Activated naive CD4-positive, alpha-beta T cell treated with anti-CD3 and anti-CD28 coated beads for 36 hours (primary cell): ENCODE measurements at regions of chr11 and their contacts with region 1.

Region 1: GRCh38 chr11:14907411-14908213 is 15.6 kb upstream of the CYP2R1 start:
- DNase-seq: peak; percentile 94
- H3K4me3 Mint-ChIP-seq: no peak overlapping the region
- H3K27ac Mint-ChIP-seq: no peak overlapping the region
- H3K4me1 Mint-ChIP-seq: peaks cover 39% of the 10 kb centered on the region
- H3K27me3 Mint-ChIP-seq: no peaks in the 10 kb centered on the region

Region 2: GRCh38 chr11:14454861-14455632 is 452.6 kb before region 1 on chr11:
- CTCF ChIA-PET with region 1: interaction called, 14 read pairs
- intact Hi-C with region 1: no loop called
- DNase-seq: no peak
- H3K4me3 Mint-ChIP-seq: no peak overlapping the region
- H3K27ac Mint-ChIP-seq: no peak overlapping the region
- H3K4me1 Mint-ChIP-seq: no peaks in the 10 kb centered on the region
- H3K27me3 Mint-ChIP-seq: no peaks in the 10 kb centered on the region

Region 3: GRCh38 chr11:14537134-14537599 is 370.4 kb before region 1 on chr11:
- CTCF ChIA-PET with region 1: interaction called, 86 read pairs
- intact Hi-C with region 1: loop called (anchors 1 kb)
- DNase-seq: peak; percentile 66
- H3K4me3 Mint-ChIP-seq: peak overlapping the region; percentile 68
- H3K27ac Mint-ChIP-seq: peak overlapping the region; percentile 90
- H3K4me1 Mint-ChIP-seq: peaks cover 32% of the 10 kb centered on the region
- H3K27me3 Mint-ChIP-seq: no peaks in the 10 kb centered on the region

Region 4: DNA sequence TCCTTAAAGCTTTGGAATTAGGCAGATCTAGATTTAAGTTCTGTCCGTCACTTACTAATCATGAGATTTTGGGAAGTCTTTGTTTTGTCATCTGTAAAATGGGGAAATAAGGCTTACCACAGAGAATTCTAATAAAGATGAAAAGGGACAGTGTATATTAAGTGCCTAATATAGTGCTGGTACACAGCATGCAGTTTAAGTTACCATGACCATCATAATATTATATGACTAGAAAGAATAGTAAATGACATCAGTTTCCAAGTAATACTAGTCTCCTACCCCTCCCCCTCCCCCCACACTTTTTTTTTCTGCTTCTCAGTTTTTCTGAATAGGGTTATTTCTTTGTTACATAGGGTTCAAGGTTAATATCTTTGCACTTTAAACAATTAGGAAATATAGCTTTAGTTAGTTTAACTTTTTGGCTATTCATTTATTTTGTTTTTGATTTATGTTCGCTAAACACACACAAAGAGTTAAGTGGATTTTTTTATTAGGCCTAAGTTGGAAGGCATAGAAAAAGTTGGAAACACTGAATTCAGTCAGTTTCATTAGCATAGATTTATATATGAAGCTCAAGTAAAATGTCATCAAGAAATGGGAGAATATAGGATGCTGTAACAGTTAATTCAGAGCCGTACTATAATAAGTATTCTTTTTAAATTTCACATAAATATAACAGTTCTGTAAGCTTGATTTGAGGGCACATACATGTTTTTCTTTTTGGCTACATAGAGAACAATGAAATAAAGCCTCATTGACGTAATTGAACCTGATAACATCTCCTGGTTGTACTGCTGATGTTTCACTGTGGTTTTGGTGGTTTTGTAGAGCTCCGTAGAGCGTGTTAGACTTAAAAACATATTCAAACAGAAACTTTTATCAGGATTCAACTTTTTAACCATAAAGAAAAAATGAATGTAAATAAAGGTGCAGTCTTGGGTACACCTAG is 142.8 kb before region 1 on chr11:
- CTCF ChIA-PET with region 1: interaction called, 11 read pairs
- intact Hi-C with region 1: no loop called
- DNase-seq: peak; percentile 58
- H3K4me3 Mint-ChIP-seq: peak overlapping the region; percentile 41
- H3K27ac Mint-ChIP-seq: no peak overlapping the region
- H3K4me1 Mint-ChIP-seq: peaks cover 45% of the 10 kb centered on the region
- H3K27me3 Mint-ChIP-seq: no peaks in the 10 kb centered on the region

Region 5: DNA sequence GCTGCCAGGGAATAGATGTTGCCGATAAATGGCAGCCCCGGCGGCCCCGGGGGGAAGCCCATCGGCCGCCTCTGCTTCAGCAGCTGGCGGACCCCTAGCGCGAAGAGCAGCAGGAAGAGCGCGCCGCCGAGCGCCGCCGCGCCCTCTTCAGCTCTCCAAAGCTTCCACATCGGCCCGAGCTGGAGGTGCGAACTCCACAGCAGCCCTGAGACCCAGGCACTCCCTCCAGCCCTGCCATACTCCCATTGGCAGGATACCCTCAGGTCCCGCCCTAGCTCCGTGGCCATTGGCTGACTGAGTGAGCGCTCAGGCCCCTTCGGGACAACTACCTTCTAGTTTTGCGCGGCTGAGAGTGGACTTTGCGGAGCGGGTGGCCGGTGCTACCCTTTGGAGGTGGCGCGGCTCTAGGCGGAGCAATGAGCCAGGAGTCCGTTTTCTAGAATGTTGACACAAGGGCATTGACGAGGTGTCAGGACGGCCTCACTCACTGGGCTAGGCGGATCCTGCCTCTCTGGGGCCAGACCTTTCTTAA is 15.5 kb before region 1 on chr11 and contains the start of gene CYP2R1:
- CTCF ChIA-PET with region 1: interaction called, 115 read pairs
- intact Hi-C with region 1: loop called (anchors 1 kb)
- DNase-seq: peak; percentile 95
- H3K4me3 Mint-ChIP-seq: peak within 1 kb of the TSS; percentile 86
- H3K27ac Mint-ChIP-seq: peak within 1 kb of the TSS; percentile 98
- H3K4me1 Mint-ChIP-seq: peaks cover 52% of the 10 kb centered on the region
- H3K27me3 Mint-ChIP-seq: no peaks in the 10 kb centered on the region
- total RNA-seq, gene CYP2R1: 12.0 to 12.6 TPM

Region 6: GRCh38 chr11:15006139-15006759 is 98.6 kb after region 1 on chr11:
- CTCF ChIA-PET with region 1: interaction called, 155 read pairs
- intact Hi-C with region 1: loop called (anchors 1 kb)
- DNase-seq: peak; percentile 10
- H3K4me3 Mint-ChIP-seq: no peak overlapping the region
- H3K27ac Mint-ChIP-seq: no peak overlapping the region
- H3K4me1 Mint-ChIP-seq: no peaks in the 10 kb centered on the region
- H3K27me3 Mint-ChIP-seq: peaks cover 27% of the 10 kb centered on the region